Caco-2 (cell line): ENCODE measurements at regions of chr10 and their contacts with region 1.

Region 1: DNA sequence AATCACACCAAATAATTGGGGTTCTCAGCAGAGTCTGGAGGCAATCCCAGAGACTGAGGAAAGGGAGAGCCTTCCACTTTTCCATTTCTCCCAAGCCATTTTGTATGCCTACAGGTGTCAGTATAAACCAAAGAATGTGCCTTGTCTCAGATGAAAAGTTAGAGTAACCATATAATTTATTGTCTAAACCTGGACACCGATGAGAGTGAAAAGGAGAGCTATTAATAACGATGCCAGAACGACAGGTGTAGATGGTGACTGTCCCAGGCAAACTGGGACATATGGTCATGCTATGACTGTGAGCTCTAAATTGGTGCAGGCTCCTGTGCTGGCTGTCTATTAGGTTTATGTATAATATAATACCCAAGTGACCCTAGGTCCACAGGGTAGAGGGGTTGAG is 219.6 kb downstream of the ARHGAP12 start:
- DNase-seq: no peak
- H3K4me3 ChIP-seq: no peak overlapping the region
- H3K4me3 Mint-ChIP-seq: no peak overlapping the region
- H3K27ac Mint-ChIP-seq: no peak overlapping the region
- H3K4me1 ChIP-seq: no peaks in the 10 kb centered on the region
- H3K4me1 Mint-ChIP-seq: no peaks in the 10 kb centered on the region
- H3K27me3 ChIP-seq: no peaks in the 10 kb centered on the region
- H3K27me3 Mint-ChIP-seq: peaks cover 2% of the 10 kb centered on the region
- CTCF ChIP-seq: peak in 1 of 2 experiments; percentile 22

Region 2: GRCh38 chr10:31677195-31678138 is 31.6 kb before region 1 on chr10:
- CTCF ChIA-PET with region 1: no interaction called
- POLR2A ChIA-PET with region 1: no interaction called
- intact Hi-C with region 1: no loop called
- DNase-seq: no peak
- H3K4me3 ChIP-seq: no peak overlapping the region
- H3K4me3 Mint-ChIP-seq: no peak overlapping the region
- H3K27ac Mint-ChIP-seq: no peak overlapping the region
- H3K4me1 ChIP-seq: no peaks in the 10 kb centered on the region
- H3K4me1 Mint-ChIP-seq: no peaks in the 10 kb centered on the region
- H3K27me3 ChIP-seq: no peaks in the 10 kb centered on the region
- H3K27me3 Mint-ChIP-seq: peaks cover 5% of the 10 kb centered on the region
- CTCF ChIP-seq: no peak

Region 3: DNA sequence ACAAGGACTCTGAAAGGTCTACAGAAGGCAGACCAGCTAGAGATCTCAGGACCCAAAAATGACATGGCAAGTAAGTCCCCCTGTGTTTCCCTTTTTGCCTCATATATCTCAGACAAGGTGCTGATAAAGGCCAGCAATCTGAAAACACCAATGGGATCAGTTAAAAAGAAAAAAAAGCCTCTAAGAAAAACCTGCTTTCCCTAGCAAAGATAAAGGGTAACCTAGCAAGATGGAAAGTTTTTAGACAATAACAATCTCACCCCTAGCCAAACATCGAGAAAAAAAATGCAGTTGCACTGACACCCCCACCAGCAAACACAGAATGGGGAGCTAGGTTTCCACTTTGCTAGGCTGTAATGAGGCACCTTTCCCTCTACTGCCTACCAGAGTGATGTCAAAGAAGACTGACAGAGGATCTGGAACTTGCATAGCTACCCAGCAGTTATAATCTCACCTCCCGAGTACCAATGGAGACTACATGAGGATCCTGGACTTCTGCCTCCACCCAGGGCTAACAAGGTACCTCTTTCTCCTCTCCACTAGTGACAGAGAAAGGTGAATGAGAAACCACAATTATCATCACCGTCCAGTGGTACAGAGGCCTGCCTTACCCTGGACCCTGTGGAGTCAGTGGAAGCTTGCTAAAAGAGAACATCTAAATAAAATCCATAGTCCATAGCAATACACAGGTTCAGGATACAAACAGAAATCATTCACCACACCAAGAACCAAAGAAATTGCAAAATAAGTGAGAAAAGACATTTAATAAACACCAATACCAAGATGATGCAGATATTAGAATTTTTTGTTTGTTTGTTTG is 21.2 kb before region 1 on chr10:
- CTCF ChIA-PET with region 1: no interaction called
- POLR2A ChIA-PET with region 1: no interaction called
- intact Hi-C with region 1: no loop called
- DNase-seq: no peak
- H3K4me3 ChIP-seq: no peak overlapping the region
- H3K4me3 Mint-ChIP-seq: no peak overlapping the region
- H3K27ac Mint-ChIP-seq: no peak overlapping the region
- H3K4me1 ChIP-seq: no peaks in the 10 kb centered on the region
- H3K4me1 Mint-ChIP-seq: no peaks in the 10 kb centered on the region
- H3K27me3 ChIP-seq: no peaks in the 10 kb centered on the region
- H3K27me3 Mint-ChIP-seq: no peaks in the 10 kb centered on the region
- CTCF ChIP-seq: no peak

Region 4: GRCh38 chr10:31770307-31770902 is 61.4 kb after region 1 on chr10:
- CTCF ChIA-PET with region 1: interaction called, 4 read pairs
- POLR2A ChIA-PET with region 1: no interaction called
- intact Hi-C with region 1: loop called (anchors 1 kb)
- DNase-seq: peak in 1 of 2 experiments; percentile 68
- H3K4me3 ChIP-seq: no peak overlapping the region
- H3K4me3 Mint-ChIP-seq: no peak overlapping the region
- H3K27ac Mint-ChIP-seq: no peak overlapping the region
- H3K4me1 ChIP-seq: no peaks in the 10 kb centered on the region
- H3K4me1 Mint-ChIP-seq: no peaks in the 10 kb centered on the region
- H3K27me3 ChIP-seq: no peaks in the 10 kb centered on the region
- H3K27me3 Mint-ChIP-seq: no peaks in the 10 kb centered on the region
- CTCF ChIP-seq: peak; percentile 79 to 94

Region 5: DNA sequence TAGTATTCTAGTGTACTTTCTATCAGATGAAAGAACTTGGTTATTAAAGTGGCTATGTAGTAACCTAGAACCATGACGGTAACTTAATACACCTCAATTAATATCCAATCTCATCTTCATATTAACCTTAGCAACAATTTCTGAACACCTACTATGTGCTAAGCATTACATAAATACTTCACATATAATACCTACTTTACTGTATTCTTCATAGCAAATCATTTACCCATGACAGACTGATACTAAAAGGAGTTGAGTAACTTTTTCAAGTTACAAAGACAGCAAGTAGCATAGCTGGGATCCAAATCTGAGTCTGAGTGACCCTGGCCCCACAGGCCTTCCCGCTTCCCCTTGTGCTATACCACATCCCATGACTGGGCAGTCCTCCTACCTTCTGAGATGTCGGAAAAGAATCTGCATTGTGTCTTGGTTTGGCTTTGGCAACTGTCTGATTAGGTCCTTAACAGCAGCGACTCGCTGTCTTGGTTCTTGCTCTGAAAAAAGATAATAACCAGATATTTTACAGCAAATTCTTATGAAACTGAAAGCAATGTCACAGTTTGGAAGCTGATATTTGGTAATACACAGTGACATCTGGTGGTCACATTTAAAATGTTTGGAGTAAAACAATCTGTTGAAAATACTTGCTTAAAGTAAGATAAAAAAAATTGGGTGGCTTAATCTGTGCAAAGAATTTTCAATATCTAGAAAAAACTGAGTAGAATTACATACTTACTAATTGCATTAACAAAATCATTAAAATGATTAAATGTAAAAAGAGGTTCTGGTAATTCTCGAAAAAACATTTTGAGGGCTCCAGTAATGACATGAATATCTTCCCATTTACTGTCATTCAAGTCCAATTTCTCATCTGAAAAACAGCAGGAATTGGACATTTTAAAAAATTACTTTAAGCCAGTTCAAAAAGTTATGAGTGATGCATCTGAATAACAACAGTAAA is 99.5 kb after region 1 on chr10:
- CTCF ChIA-PET with region 1: no interaction called
- POLR2A ChIA-PET with region 1: no interaction called
- intact Hi-C with region 1: loop called (anchors 1 kb)
- DNase-seq: peak in 1 of 2 experiments; percentile 42
- H3K4me3 ChIP-seq: no peak overlapping the region
- H3K4me3 Mint-ChIP-seq: no peak overlapping the region
- H3K27ac Mint-ChIP-seq: no peak overlapping the region
- H3K4me1 ChIP-seq: no peaks in the 10 kb centered on the region
- H3K4me1 Mint-ChIP-seq: no peaks in the 10 kb centered on the region
- H3K27me3 ChIP-seq: no peaks in the 10 kb centered on the region
- H3K27me3 Mint-ChIP-seq: no peaks in the 10 kb centered on the region
- CTCF ChIP-seq: peak; percentile 52 to 69